ENCODE measurements at regions of chr13 and their contacts with region 1.

Region 1: GRCh38 chr13:111066544-111066943 is 48.6 kb upstream of the ARHGEF7 start:
- DNase-seq: no peak
- H3K4me3 ChIP-seq: no peak overlapping the region
- H3K4me3 Mint-ChIP-seq: peak overlapping the region; percentile 74
- H3K27ac Mint-ChIP-seq: no peak overlapping the region
- H3K4me1 ChIP-seq: no peaks in the 10 kb centered on the region
- H3K4me1 Mint-ChIP-seq: no peaks in the 10 kb centered on the region
- H3K27me3 ChIP-seq: no peaks in the 10 kb centered on the region
- H3K27me3 Mint-ChIP-seq: peaks cover 2% of the 10 kb centered on the region
- CTCF ChIP-seq: no peak

Region 2: GRCh38 chr13:111216166-111216960 is 149.8 kb after region 1 on chr13:
- CTCF ChIA-PET with region 1: interaction called, 15 read pairs
- POLR2A ChIA-PET with region 1: no interaction called
- intact Hi-C with region 1: no loop called
- DNase-seq: peak; percentile 50 to 63
- H3K4me3 ChIP-seq: no peak overlapping the region
- H3K4me3 Mint-ChIP-seq: no peak overlapping the region
- H3K27ac Mint-ChIP-seq: no peak overlapping the region
- H3K4me1 ChIP-seq: peaks cover 2% of the 10 kb centered on the region; the same call in 1 of the 2 replicates
- H3K4me1 Mint-ChIP-seq: peaks cover 8% of the 10 kb centered on the region
- H3K27me3 ChIP-seq: no peaks in the 10 kb centered on the region
- H3K27me3 Mint-ChIP-seq: no peaks in the 10 kb centered on the region
- CTCF ChIP-seq: peak; percentile 37 to 67